Testis (tissue), 5 donors: ENCODE measurements at regions of chr1 and their contacts with region 1.

Region 1: DNA sequence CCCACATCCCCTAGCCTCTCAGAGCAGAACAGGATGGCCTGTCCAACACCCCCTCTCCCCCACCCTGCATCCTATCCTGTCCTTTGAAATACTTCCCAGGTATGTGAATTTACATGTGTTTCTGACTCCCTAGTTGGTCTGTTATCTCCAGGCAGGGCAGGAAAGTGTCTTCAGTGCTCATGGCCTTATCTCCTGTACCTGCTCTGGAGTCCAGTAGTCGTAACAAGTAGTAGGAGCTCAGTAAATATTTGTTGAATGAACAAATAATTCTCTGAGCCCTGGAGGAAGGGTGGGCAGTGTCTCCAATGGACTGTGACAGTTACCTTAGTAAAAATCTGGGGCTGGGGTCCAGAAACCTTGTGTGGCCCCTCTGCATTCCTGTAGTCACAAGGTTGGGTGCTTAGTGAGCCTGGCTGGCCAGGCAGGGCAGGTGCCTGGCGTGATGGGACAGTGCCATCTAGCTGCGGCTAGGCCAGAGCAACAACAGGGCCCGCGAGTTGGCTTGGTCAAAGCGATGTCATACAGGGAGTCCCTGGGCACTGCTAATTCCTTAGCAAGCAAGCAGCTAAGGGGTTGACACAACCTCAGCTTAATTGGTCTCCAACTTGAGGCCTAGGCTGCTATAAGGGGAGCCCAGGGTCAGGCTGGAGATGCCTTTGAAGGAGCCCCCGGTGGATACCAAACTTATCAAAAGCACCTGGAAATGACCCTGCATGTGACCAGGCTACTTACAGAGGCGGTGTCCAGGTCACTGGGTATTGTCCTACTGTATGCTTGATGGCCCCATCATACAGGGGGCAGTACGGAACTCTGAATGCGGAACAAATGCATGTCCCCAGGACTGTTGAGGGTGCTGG is 89.0 kb upstream of the PPM1J start:
- DNase-seq: peak; percentile 87
- H3K4me3 ChIP-seq: no peak overlapping the region
- H3K27ac ChIP-seq: no peak overlapping the region
- H3K4me1 ChIP-seq: no peaks in the 10 kb centered on the region
- H3K27me3 ChIP-seq: no peaks in the 10 kb centered on the region
- CTCF ChIP-seq: peak; percentile 32 to 77 (median 58)
- POLR2A ChIP-seq: no peak

Region 2: GRCh38 chr1:112715264-112716053 is 88.7 kb before region 1 on chr1 and contains the start of gene PPM1J:
- intact Hi-C with region 1: loop called (anchors 5 kb)
- DNase-seq: peak; percentile 96
- H3K4me3 ChIP-seq: peak within 1 kb of the TSS; percentile 60 to 68
- H3K27ac ChIP-seq: peak within 1 kb of the TSS; percentile 20 to 68
- H3K4me1 ChIP-seq: peaks cover 15% of the 10 kb centered on the region
- H3K27me3 ChIP-seq: no peaks in the 10 kb centered on the region
- CTCF ChIP-seq: no peak
- POLR2A ChIP-seq: no peak
- total RNA-seq, gene PPM1J: 45.5 to 88.7 TPM